Transverse colon (tissue), 4 donors: ENCODE measurements at regions of chr17 and their contacts with region 1.

Region 1: GRCh38 chr17:33234930-33235685 is 58.0 kb downstream of the ASIC2 start:
- DNase-seq: peak; percentile 36
- H3K4me3 ChIP-seq: no peak overlapping the region
- H3K27ac ChIP-seq: peak overlapping the region in 3 of 4 donors; percentile 27 to 74 (median 61)
- H3K4me1 ChIP-seq: peaks cover 5 to 15% (median 10%) of the 10 kb centered on the region in 4 donors
- H3K27me3 ChIP-seq: no peaks in the 10 kb centered on the region
- CTCF ChIP-seq: no peak
- EP300 ChIP-seq: no peak
- POLR2A ChIP-seq: no peak

Region 2: GRCh38 chr17:33142705-33143299 is 92.3 kb before region 1 on chr17:
- in situ Hi-C with region 1: loop called in 1 of 4 experiments (anchors 25 kb)
- intact Hi-C with region 1: no loop called
- DNase-seq: no peak
- H3K4me3 ChIP-seq: no peak overlapping the region
- H3K27ac ChIP-seq: no peak overlapping the region
- H3K4me1 ChIP-seq: no peaks in the 10 kb centered on the region
- H3K27me3 ChIP-seq: no peaks in the 10 kb centered on the region
- CTCF ChIP-seq: no peak
- EP300 ChIP-seq: no peak
- POLR2A ChIP-seq: no peak